K562 (cell line): ENCODE measurements at regions of chr5 and their contacts with region 1.

Region 1: GRCh38 chr5:132500931-132501630 is 10.5 kb upstream of the IRF1 start:
- DNase-seq: peak; percentile 85 to 94 (median 91)
- ATAC-seq: peak; percentile 70
- H3K4me3 ChIP-seq: no peak overlapping the region
- H3K27ac ChIP-seq: no peak overlapping the region
- H3K4me1 ChIP-seq: peaks cover 26 to 41% of the 10 kb centered on the region in 2 experiments; a peak in 4 of 5 replicates
- H3K27me3 ChIP-seq: no peaks in the 10 kb centered on the region
- CTCF ChIP-seq: peak; percentile 91 to 94 (median 93)
- EP300 ChIP-seq: peak; percentile 26; the same call in 1 of the 2 replicates
- POLR2A ChIP-seq: no peak
- RAD21 ChIP-seq: peak; percentile 98 to 99

Region 2: DNA sequence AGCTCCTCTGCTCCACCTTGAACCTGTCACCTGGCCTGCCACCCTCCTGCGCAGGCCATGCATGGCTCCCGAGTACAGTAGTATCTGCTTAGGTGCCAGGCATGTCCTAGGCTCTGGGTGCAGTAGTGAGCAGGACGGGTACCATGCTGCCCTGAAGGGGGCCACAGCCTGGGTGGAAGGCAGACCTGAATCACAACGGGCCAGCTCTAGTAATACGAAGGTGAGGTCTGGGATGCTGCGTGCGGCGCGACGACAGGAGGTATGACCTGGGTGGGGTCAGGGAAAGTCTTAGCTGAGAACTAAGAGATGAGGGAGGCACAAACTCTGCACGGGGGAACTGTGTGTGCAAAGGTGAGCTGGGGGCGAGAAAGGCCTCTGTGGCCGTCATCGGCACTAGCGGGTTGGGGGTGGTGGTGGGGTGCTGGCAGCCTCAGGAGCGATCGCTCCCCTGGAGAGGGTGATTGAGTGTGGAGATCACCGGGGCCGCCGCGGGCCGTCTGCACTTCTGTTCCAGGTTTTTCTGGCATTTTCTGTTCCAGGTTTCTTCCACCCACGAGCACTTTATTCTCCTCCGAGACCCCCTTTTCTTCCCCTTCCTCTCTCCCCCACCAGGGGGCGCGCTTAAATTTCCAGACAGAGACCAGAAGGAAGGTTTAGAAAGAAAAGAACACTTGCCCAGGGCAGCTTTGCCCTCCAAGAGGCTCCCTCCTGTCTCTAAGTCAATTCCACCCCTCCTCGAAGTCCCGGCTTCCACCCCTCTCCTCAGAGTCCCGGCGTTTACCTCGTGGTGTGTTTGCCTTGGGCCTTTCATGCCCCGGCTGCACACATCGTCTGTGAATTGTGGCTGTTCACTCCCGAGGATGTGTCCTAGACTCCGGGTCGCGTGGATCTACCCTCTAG is 228.5 kb before region 1 on chr5:
- CTCF ChIA-PET with region 1: no interaction called
- POLR2A ChIA-PET with region 1: no interaction called
- in situ Hi-C with region 1: no loop called
- intact Hi-C with region 1: loop called (anchors 1 kb)
- DNase-seq: peak; percentile 59 to 85 (median 65)
- ATAC-seq: peak; percentile 82
- H3K4me3 ChIP-seq: no peak overlapping the region
- H3K27ac ChIP-seq: no peak overlapping the region
- H3K4me1 ChIP-seq: peaks cover 12 to 41% of the 10 kb centered on the region in 2 experiments; a peak in 4 of 5 replicates
- H3K27me3 ChIP-seq: no peaks in the 10 kb centered on the region
- CTCF ChIP-seq: peak; percentile 82 to 89 (median 84)
- EP300 ChIP-seq: no peak
- POLR2A ChIP-seq: no peak
- RAD21 ChIP-seq: peak; percentile 62 to 89

Region 3: DNA sequence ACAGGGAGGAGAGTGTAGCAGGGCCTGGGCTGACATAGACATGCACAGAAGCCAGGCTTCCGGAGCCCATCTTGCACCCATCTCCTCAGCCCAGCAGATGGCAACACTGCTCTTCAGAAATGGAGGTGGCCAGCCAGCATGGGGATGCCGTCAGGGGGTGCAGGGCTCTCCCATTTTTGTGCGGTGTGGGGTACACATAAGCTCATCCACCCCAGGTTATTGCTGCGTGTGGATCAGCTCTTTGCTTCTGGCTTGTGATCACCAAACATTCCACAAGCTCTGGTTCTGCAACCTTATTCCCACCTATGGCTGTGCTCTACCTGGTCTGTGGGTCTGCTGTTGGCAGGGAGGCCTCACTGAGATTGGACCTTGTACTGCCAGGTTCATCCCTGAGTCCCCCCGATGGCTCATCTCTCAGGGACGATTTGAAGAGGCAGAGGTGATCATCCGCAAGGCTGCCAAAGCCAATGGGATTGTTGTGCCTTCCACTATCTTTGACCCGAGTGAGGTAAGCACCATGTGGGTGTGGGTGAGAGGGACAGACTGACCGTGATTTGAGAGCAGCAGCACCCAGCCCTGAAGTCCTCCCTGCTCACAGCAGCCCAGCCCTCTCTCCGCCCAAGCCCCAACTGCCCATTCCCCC is 114.3 kb before region 1 on chr5:
- CTCF ChIA-PET with region 1: interaction called, 79 read pairs
- POLR2A ChIA-PET with region 1: interaction called, 3 read pairs
- in situ Hi-C with region 1: loop called (anchors 10 kb)
- intact Hi-C with region 1: loop called (anchors 1 kb)
- DNase-seq: peak; percentile 51 to 74 (median 67)
- ATAC-seq: peak; percentile 96
- H3K4me3 ChIP-seq: no peak overlapping the region
- H3K27ac ChIP-seq: no peak overlapping the region
- H3K4me1 ChIP-seq: peaks cover 10 to 12% of the 10 kb centered on the region in 2 experiments; a peak in 3 of 5 replicates
- H3K27me3 ChIP-seq: no peaks in the 10 kb centered on the region
- CTCF ChIP-seq: peak; percentile 81 to 87 (median 82)
- EP300 ChIP-seq: no peak
- POLR2A ChIP-seq: no peak
- RAD21 ChIP-seq: peak; percentile 92 to 95

Region 4: GRCh38 chr5:132419502-132420468 is 81.3 kb before region 1 on chr5:
- CTCF ChIA-PET with region 1: interaction called, 10 read pairs
- POLR2A ChIA-PET with region 1: interaction called, 5 read pairs
- in situ Hi-C with region 1: no loop called
- intact Hi-C with region 1: loop called (anchors 1 kb)
- DNase-seq: peak; percentile 85 to 89 (median 88)
- ATAC-seq: peak; percentile 81
- H3K4me3 ChIP-seq: no peak overlapping the region
- H3K27ac ChIP-seq: peak overlapping the region; percentile 42; the same call in 2 of the 3 replicates
- H3K4me1 ChIP-seq: peaks cover 22 to 50% of the 10 kb centered on the region in 2 experiments
- H3K27me3 ChIP-seq: no peaks in the 10 kb centered on the region
- CTCF ChIP-seq: peak; percentile 89 to 95 (median 90)
- EP300 ChIP-seq: peak; percentile 8; the same call in 1 of the 2 replicates
- POLR2A ChIP-seq: no peak
- RAD21 ChIP-seq: peak; percentile 94 to 96

Region 5: DNA sequence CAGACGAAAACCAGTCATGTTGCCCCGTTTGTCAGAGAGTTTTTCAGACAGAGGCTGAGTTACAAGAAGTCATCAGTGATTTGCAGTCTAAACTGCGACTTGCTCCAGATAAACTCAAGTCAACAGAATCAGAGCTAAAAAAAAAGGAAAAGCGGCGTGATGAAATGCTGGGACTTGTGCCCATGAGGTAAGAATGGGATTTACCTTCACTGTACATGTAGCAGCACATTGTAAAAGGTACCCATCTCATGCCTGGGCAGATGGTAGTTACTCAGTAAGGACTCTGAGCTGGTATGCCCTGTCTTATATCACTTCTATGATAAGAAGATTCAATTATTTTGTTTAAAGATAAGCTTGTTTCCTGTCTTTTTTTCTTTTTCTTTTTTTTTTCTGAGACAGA is 94.5 kb after region 1 on chr5:
- CTCF ChIA-PET with region 1: no interaction called
- POLR2A ChIA-PET with region 1: no interaction called
- in situ Hi-C with region 1: no loop called
- intact Hi-C with region 1: no loop called
- DNase-seq: no peak
- ATAC-seq: no peak
- H3K4me3 ChIP-seq: no peak overlapping the region
- H3K27ac ChIP-seq: no peak overlapping the region
- H3K4me1 ChIP-seq: no peaks in the 10 kb centered on the region
- H3K27me3 ChIP-seq: no peaks in the 10 kb centered on the region
- CTCF ChIP-seq: no peak
- EP300 ChIP-seq: no peak
- POLR2A ChIP-seq: no peak
- RAD21 ChIP-seq: no peak